Posterior vena cava (tissue), 2 donors: ENCODE measurements at regions of chr5 and their contacts with region 1.

Region 1: GRCh38 chr5:1641560-1642166 is 117.9 kb upstream of the LPCAT1 start:
- DNase-seq: peak; percentile 94

Region 2: DNA sequence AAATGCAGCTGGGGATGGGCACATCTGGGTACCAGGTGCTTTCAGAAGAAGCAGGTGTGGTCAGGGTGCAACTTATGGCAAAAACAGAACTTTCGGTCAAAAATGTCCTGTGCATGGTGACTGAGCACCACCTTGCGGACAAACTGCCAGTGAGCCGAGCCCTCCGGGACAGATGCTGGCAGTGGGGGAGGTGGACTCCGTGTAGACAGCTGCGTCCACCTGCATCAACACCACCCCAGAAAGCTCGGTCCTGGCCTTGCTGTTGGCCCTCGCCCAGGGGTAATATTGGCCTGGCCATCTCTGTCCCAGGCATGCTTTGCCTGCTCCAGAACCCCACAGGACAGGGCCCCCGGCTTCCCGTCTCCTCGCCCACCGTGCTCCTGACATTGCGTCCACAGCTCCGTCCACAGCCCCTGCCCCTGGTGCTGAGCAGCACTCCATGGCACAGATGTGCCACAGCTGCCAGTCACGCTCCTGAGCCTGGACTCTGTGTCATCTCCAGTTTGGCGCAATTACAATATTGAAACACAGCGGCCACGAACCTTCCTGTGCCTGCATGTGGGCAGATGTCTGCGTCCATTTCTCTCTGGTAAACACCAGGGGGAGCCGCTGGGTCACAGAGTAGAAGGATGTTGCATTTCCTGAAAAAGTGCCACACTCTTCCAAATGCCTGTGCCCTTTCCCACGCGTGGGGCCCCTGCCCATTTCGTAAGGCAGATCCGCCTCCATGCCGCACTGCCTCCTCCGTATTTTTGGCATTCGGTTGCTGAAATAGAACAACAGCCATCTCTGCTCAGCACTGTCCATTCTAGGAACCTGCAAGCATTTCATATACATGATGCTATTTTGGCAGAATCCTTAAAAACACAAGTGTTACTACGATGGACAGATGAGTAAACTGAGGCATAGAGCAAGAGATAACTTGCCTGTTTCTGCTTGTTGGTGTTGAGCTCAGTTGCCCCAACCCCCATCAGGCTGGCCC is 473.6 kb before region 1 on chr5:
- intact Hi-C with region 1: loop called (anchors 5 kb)
- DNase-seq: peak; percentile 87

Region 3: GRCh38 chr5:1174122-1174936 is 467.3 kb before region 1 on chr5:
- intact Hi-C with region 1: loop called (anchors 5 kb)
- DNase-seq: peak; percentile 90

Region 4: GRCh38 chr5:1479581-1480188 is 162.0 kb before region 1 on chr5:
- intact Hi-C with region 1: loop called in 1 of 2 experiments (anchors 10 kb)
- DNase-seq: no peak